ENCODE measurements at regions of chr10 and their contacts with region 1.

Region 1: DNA sequence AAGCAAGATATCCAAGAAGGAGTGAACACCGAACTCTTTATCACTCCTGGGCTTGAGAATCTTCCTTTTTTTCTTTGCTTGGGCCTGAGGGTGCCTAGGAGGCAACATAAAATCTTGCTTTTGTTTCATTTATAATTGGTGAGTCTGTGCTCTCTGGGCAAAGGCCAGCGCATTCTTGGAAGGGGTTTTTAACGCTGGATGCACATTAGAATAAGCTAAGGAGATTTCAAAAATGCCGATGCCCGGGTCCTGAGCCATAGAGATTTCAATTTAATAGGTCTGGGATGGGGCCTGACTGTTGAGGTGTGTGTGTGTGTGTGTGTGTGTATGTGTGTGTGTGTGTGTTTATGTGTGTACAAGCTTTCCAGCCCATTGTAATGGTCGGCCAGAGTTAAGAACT is 62.0 kb upstream of the SORCS3 start:
- DNase-seq: no peak
- ATAC-seq: no peak

Region 2: GRCh38 chr10:104559935-104560334 is 19.2 kb before region 1 on chr10:
- intact Hi-C with region 1: loop called (anchors 1 kb)
- DNase-seq: no peak
- ATAC-seq: no peak

Measured in sciatic nerve (tissue), 2 donors.